ENCODE measurements at regions of chr6 and their contacts with region 1.

Region 1: DNA sequence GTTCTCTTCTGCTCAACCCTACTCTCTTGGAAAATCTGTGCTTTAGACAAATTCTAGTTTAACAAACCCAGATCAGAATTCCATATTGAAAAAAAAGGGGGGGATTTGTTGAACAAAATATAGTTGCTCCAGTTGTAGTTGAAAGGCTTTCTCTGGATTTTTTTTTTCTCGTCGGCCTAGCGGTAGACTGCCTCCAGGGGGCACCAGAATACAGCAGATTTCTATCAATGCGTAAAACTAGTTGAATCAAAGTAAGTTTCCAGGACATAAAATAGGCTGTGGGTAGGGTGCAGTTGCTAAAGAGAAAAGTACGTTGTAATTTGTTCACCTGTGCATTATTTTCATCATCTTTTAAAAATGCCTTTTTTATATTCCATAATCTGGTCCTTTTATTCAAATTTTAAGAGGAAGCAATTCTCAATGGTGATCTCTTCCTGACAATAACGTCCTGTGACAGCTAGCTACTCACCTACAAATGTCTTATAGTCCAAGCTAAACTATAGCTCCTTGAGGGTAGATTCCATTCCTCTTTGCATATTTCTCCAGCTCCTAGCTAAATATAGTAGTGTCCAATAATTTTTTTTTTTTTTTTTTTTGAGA is 105.4 kb downstream of the PERP start:
- DNase-seq: peak; percentile 85
- ATAC-seq: peak; percentile 56
- H3K4me3 Mint-ChIP-seq: no peak overlapping the region
- H3K27ac Mint-ChIP-seq: no peak overlapping the region
- H3K4me1 Mint-ChIP-seq: peaks cover 17% of the 10 kb centered on the region
- H3K27me3 Mint-ChIP-seq: no peaks in the 10 kb centered on the region
- CTCF ChIP-seq: peak; percentile 92

Region 2: DNA sequence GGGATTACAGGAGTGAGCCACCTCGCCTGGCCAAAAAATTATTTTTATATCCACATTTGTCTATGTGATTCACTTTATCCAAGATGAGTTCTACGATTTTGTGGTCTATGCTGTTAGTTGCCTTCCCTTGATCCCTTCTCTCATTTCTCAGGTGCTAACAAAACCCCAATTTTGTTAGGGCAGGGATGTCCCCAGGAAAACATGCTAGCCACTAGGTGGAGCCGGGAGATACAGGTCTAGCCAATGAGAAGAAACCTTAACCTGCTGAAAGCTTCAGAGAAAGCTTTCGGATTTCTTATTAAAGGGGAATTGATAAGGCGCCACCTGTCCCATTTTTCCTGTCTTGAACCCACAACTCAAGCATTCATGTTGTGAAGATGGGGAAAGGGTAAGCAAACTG is 340.2 kb before region 1 on chr6:
- CTCF ChIA-PET with region 1: interaction called, 13 read pairs
- POLR2A ChIA-PET with region 1: no interaction called
- intact Hi-C with region 1: no loop called
- DNase-seq: peak; percentile 71
- ATAC-seq: no peak
- H3K4me3 Mint-ChIP-seq: no peak overlapping the region
- H3K27ac Mint-ChIP-seq: no peak overlapping the region
- H3K4me1 Mint-ChIP-seq: peaks cover 22% of the 10 kb centered on the region
- H3K27me3 Mint-ChIP-seq: peaks cover 2% of the 10 kb centered on the region
- CTCF ChIP-seq: peak; percentile 32

Region 3: GRCh38 chr6:137878486-137879285 is 123.2 kb before region 1 on chr6:
- CTCF ChIA-PET with region 1: interaction called, 59 read pairs
- POLR2A ChIA-PET with region 1: no interaction called
- intact Hi-C with region 1: no loop called
- DNase-seq: no peak
- ATAC-seq: no peak
- H3K4me3 Mint-ChIP-seq: peak overlapping the region; percentile 98
- H3K27ac Mint-ChIP-seq: peak overlapping the region; percentile 95
- H3K4me1 Mint-ChIP-seq: peaks cover 90% of the 10 kb centered on the region
- H3K27me3 Mint-ChIP-seq: no peaks in the 10 kb centered on the region
- CTCF ChIP-seq: no peak

Region 4: GRCh38 chr6:137944793-137945498 is 56.9 kb before region 1 on chr6:
- CTCF ChIA-PET with region 1: interaction called, 18 read pairs
- POLR2A ChIA-PET with region 1: no interaction called
- intact Hi-C with region 1: no loop called
- DNase-seq: no peak
- ATAC-seq: peak; percentile 31
- H3K4me3 Mint-ChIP-seq: no peak overlapping the region
- H3K27ac Mint-ChIP-seq: peak overlapping the region; percentile 4
- H3K4me1 Mint-ChIP-seq: peaks cover 53% of the 10 kb centered on the region
- H3K27me3 Mint-ChIP-seq: no peaks in the 10 kb centered on the region
- CTCF ChIP-seq: peak; percentile 79

Region 5: DNA sequence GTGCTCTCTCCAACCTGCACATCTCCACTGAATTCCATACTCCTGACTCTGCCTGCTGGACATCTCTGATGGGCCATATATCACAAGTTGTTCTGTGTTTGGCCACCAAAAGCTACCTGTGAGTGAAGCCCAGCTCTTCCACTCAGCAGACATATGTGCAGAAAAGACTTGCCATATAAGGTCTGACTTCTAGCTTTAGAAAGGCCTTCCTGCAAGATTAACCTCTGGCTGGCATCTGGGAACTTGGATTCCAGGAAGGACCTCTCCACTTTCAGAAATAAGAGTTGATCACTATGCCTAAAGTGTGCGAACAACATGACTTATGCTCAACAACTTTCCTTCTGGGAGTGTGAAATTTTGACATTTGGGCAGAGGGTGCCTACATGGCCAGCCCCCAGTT is 21.1 kb before region 1 on chr6:
- CTCF ChIA-PET with region 1: interaction called, 16 read pairs
- POLR2A ChIA-PET with region 1: no interaction called
- intact Hi-C with region 1: no loop called
- DNase-seq: no peak
- ATAC-seq: no peak
- H3K4me3 Mint-ChIP-seq: no peak overlapping the region
- H3K27ac Mint-ChIP-seq: no peak overlapping the region
- H3K4me1 Mint-ChIP-seq: peaks cover 28% of the 10 kb centered on the region
- H3K27me3 Mint-ChIP-seq: no peaks in the 10 kb centered on the region
- CTCF ChIP-seq: no peak

Region 6: GRCh38 chr6:138115877-138116660 is 114.2 kb after region 1 on chr6:
- CTCF ChIA-PET with region 1: interaction called, 11 read pairs
- POLR2A ChIA-PET with region 1: no interaction called
- intact Hi-C with region 1: no loop called
- DNase-seq: peak; percentile 62
- ATAC-seq: peak; percentile 87
- H3K4me3 Mint-ChIP-seq: no peak overlapping the region
- H3K27ac Mint-ChIP-seq: no peak overlapping the region
- H3K4me1 Mint-ChIP-seq: peaks cover 6% of the 10 kb centered on the region
- H3K27me3 Mint-ChIP-seq: peaks cover 24% of the 10 kb centered on the region
- CTCF ChIP-seq: peak; percentile 78

Measured in activated CD8-positive, alpha-beta T cell treated with anti-CD3 and anti-CD28 coated beads for 36 hours (primary cell).